ENCODE measurements at regions of chr12 and their contacts with region 1.

Region 1: DNA sequence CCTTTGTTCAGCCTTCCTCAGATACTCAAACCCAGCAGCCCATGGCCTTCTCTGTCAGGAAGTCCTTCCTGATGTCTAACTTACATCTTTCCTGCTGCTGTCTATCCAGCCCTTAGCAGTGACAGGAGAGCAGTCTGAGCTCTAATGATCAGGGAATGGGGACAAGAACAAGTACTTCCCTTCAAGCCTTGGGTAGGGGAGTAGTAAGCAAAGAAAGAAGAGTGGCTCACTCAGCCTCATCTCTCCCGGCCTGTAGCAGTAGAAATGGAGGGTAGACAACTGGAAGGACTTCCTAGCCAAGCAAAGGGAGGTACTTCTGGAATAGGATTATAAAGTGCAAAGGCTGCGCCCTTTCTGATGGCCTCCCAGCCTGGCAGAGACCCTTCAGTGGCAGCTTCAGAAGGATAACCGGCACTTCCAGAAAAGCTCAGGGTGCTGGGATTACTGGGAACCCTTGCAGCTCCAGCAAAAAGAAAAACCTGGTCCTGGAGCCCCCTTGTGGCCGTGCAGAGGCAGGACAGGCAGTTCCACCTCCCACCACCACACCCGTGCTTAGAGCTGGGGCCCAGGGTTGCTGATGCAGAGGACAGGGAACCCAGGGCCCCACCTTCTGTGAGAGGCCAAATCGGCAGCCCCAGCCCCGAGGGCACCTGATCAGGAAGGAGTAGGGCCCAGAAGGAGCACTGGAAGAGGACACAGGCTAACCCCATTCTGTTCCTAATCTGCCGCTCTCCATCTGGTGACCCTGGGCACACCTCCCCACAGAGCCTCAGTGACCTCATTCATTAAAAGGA is 12.4 kb upstream of the SMUG1 start:
- DNase-seq: peak; percentile 49 to 80
- H3K4me3 ChIP-seq: no peak overlapping the region
- H3K27ac ChIP-seq: no peak overlapping the region
- H3K4me1 ChIP-seq: peaks cover 0 to 7% (median 2%) of the 10 kb centered on the region in 4 donors
- H3K27me3 ChIP-seq: peaks cover 0 to 7% of the 10 kb centered on the region in 2 donors
- CTCF ChIP-seq: peak; percentile 99 to 100

Region 2: DNA sequence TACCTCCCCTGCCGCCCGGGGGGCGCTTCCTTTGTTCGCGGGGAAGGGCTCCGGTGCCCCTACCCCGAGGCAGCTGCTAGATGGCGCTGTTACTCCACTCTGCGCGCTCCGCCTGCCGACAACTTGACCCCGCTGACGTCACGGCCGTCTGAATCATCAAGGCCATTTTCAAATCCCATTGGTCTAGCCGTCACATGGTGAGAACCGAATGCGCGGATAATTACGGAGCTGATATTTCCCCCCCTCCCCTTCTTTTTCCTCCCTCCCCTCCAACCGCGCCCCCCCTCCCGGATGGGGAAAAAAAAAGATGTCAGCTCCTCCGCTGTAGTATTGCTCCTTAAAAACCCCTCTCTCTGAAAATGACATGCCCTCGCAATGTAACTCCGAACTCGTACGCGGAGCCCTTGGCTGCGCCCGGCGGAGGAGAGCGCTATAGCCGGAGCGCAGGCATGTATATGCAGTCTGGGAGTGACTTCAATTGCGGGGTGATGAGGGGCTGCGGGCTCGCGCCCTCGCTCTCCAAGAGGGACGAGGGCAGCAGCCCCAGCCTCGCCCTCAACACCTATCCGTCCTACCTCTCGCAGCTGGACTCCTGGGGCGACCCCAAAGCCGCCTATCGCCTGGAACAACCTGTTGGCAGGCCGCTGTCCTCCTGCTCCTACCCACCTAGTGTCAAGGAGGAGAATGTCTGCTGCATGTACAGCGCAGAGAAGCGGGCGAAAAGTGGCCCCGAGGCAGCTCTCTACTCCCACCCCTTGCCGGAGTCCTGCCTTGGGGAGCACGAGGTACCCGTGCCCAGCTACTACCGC is 216.1 kb before region 1 on chr12 and contains the start of gene HOXC10:
- intact Hi-C with region 1: loop called (anchors 5 kb)
- DNase-seq: peak; percentile 97 to 98
- H3K4me3 ChIP-seq: peak within 1 kb of the TSS; percentile 64 to 84
- H3K27ac ChIP-seq: peak within 1 kb of the TSS; percentile 93 to 98
- H3K4me1 ChIP-seq: peaks cover 4 to 52% (median 31%) of the 10 kb centered on the region in 4 donors
- H3K27me3 ChIP-seq: no peaks in the 10 kb centered on the region
- CTCF ChIP-seq: peak; percentile 77 to 82